ENCODE measurements at regions of chr16 and their contacts with region 1.

Region 1: GRCh38 chr16:1763521-1764511 is 7.5 kb downstream of the NME3 start:
- DNase-seq: peak; percentile 69 to 98 (median 96)
- ATAC-seq: peak; percentile 91
- H3K4me3 ChIP-seq: no peak overlapping the region
- H3K27ac ChIP-seq: peak overlapping the region; percentile 35; the same call in 1 of the 3 replicates
- H3K4me1 ChIP-seq: peaks cover 9 to 85% of the 10 kb centered on the region in 2 experiments; a peak in 4 of 5 replicates
- H3K27me3 ChIP-seq: no peaks in the 10 kb centered on the region
- CTCF ChIP-seq: peak; percentile 35 to 55 (median 43); a peak in 4 of 6 replicates
- EP300 ChIP-seq: no peak
- POLR2A ChIP-seq: no peak
- RAD21 ChIP-seq: peak in 1 of 2 experiments; percentile 45; a peak in 2 of 4 replicates

Region 2: DNA sequence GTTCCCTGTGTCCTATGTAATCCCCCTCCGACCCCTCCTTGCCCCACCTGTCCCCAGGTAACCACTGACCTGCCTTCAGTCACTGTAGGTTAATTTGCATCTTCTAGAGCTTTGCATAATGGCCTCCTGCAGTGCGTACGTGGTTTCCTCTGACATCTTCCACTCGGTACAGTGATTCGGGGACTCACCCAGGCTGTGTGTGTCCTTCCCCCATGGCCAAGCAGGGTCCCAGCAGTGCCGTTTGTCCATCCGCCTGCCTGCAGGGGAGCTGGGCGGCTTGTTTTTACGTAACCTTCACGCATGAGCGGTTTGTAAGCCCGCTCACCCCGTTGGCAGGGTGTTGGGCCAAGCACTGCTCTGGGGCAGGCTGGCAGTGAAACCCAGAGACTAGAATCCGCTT is 49.9 kb before region 1 on chr16:
- CTCF ChIA-PET with region 1: no interaction called
- POLR2A ChIA-PET with region 1: interaction called, 3 read pairs
- in situ Hi-C with region 1: loop called (anchors 5 kb)
- intact Hi-C with region 1: no loop called
- DNase-seq: no peak
- ATAC-seq: no peak
- H3K4me3 ChIP-seq: no peak overlapping the region
- H3K27ac ChIP-seq: no peak overlapping the region
- H3K4me1 ChIP-seq: peaks cover 6 to 20% of the 10 kb centered on the region in 2 experiments; a peak in 4 of 5 replicates
- H3K27me3 ChIP-seq: no peaks in the 10 kb centered on the region
- CTCF ChIP-seq: no peak
- EP300 ChIP-seq: no peak
- POLR2A ChIP-seq: no peak
- RAD21 ChIP-seq: no peak

Region 3: GRCh38 chr16:1734123-1734832 is 29.5 kb before region 1 on chr16:
- CTCF ChIA-PET with region 1: no interaction called
- POLR2A ChIA-PET with region 1: no interaction called
- in situ Hi-C with region 1: no loop called
- intact Hi-C with region 1: no loop called
- DNase-seq: no peak
- ATAC-seq: no peak
- H3K4me3 ChIP-seq: no peak overlapping the region
- H3K27ac ChIP-seq: no peak overlapping the region; the same call in 2 of the 3 replicates
- H3K4me1 ChIP-seq: peaks cover 0 to 34% of the 10 kb centered on the region in 2 experiments; a peak in 2 of 5 replicates
- H3K27me3 ChIP-seq: no peaks in the 10 kb centered on the region
- CTCF ChIP-seq: no peak
- EP300 ChIP-seq: no peak
- POLR2A ChIP-seq: no peak
- RAD21 ChIP-seq: no peak